ENCODE measurements at regions of chr10 and their contacts with region 1.

Region 1: GRCh38 chr10:15719899-15720634 is at the start of gene ITGA8:
- DNase-seq: no peak
- H3K4me3 ChIP-seq: peak within 1 kb of the TSS; percentile 46
- CTCF ChIP-seq: peak; percentile 60

Region 2: DNA sequence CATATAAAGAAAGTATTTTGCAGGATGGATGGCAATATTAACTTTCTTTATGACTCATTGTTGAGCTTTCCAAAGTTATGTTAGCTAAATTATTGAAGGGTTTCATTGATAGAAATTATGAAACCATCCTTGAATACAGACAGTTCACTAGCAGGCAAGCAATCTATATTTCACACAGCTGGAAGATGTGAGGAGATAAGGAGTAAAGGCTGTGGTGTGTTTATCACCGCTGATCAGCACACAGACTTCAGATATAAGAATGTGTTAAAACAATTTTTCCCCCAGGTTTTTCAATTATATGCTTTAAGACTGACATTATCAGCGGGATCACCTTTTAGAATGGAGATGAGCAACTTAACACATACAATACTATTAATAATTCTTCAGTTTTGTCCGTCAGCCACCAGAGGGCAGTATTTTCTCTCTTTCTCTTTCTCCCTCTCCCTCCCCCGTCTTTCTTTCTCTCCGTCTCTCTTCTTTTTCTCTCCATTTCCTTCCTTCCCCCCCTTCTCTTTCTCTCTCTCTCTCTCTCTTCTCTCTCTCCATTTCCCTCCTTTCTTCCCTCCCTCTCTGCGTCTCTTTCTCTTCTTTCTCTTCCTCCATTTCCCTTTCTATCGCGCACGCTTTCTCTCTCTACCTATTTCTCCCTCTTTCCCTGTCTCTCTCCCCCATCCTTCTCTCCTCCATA is 286.1 kb before region 1 on chr10:
- in situ Hi-C with region 1: loop called (anchors 25 kb)
- DNase-seq: peak; percentile 34
- H3K4me3 ChIP-seq: peak overlapping the region; percentile 32
- CTCF ChIP-seq: peak; percentile 49

Region 3: DNA sequence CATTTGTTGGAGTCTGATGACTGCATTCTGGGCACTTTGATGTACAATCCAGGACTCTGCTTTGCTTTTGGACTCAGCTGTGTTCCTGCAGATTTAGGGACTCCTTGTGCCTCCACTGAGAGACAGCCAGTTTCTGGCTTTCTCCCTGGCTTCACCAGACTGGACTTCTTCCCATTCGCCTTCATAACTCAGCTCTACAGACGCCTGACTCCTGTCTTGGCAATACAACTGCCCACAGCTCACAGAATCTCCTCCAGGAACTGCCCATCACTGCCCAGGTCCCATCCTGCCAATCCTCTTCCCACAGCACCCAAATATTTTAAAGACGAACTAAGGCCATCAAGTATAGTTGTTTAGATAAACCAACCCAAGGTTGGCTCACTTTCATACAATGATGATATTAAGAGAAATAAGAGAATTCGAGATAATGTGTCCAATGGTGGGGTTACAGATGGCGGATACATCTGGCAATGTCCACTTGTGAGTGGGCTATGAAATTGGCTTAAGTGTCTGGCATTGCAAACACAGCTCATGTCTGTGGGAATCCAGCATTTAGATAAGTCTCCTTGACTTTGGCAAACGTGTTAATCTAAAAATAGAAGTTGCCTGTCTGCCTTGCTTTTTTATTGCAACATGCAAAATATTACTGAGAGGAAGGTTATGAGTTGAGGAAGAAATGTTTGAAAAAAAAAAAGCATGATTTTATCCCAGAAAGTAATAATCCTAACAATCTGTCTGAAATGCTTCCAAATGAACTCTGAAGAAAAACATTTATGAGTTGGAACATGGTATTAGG is 95.5 kb before region 1 on chr10:
- in situ Hi-C with region 1: loop called (anchors 25 kb)
- DNase-seq: no peak
- H3K4me3 ChIP-seq: no peak overlapping the region
- CTCF ChIP-seq: no peak

Region 4: DNA sequence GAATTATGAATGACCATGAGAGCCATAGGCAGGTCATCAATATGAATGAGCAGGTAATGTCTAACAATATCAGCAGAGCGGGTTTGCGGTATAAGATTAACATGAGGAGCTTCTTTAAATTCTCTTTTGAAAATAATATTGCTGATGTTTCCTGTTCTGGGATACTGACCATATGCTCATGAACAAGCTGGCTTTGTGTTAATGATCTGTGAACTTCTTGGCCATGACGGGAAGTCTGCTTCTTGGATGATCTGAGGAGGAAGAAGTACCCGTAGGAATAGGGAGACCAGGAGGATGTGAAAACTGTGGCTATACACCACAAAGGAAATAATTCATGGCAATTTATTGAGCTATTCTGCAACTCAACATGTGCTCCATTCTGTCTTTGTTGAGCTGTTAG is 39.0 kb before region 1 on chr10:
- in situ Hi-C with region 1: no loop called
- DNase-seq: no peak
- H3K4me3 ChIP-seq: no peak overlapping the region
- CTCF ChIP-seq: no peak

Measured in astrocyte of the cerebellum (primary cell).